Esophagus muscularis mucosa (tissue), 4 donors: ENCODE measurements at regions of chr10 and their contacts with region 1.

Region 1: DNA sequence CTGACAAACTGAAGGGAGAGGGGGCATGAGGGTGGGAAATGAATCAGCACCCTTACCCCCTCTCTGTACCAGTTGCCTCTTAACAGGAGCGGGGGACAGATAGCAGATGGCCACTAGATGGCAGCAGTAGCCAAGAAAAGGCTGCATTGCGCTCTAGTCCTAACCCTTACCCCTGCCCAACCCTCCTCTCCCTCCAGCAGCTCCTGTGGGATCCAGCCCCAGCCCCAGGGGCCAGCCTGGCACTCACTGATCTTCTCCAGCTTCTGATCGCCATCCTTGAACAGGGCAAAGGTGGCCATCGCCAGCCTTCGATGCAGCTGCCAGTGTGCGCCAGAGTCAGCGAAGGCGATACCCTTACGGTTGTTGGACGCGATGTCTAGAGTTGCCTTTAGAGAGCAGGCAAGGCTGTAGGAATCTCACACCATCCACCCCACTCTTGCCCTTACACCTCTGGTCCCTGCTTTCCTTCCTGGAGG is 2.2 kb downstream of the CYP17A1 start:
- DNase-seq: no peak
- H3K4me3 ChIP-seq: no peak overlapping the region
- H3K27ac ChIP-seq: no peak overlapping the region
- H3K4me1 ChIP-seq: peaks cover 4 to 11% (median 8%) of the 10 kb centered on the region in 4 donors
- H3K27me3 ChIP-seq: no peaks in the 10 kb centered on the region
- CTCF ChIP-seq: peak; percentile 83 to 86 (median 85)
- EP300 ChIP-seq: no peak
- POLR2A ChIP-seq: no peak

Region 2: GRCh38 chr10:102729029-102730026 is 105.7 kb before region 1 on chr10:
- intact Hi-C with region 1: loop called (anchors 5 kb)
- DNase-seq: no peak
- H3K4me3 ChIP-seq: no peak overlapping the region
- H3K27ac ChIP-seq: no peak overlapping the region
- H3K4me1 ChIP-seq: peaks cover 9 to 13% (median 12%) of the 10 kb centered on the region in 4 donors
- H3K27me3 ChIP-seq: no peaks in the 10 kb centered on the region
- CTCF ChIP-seq: peak in 2 of 3 experiments; percentile 92 to 96
- EP300 ChIP-seq: no peak
- POLR2A ChIP-seq: no peak

Region 3: DNA sequence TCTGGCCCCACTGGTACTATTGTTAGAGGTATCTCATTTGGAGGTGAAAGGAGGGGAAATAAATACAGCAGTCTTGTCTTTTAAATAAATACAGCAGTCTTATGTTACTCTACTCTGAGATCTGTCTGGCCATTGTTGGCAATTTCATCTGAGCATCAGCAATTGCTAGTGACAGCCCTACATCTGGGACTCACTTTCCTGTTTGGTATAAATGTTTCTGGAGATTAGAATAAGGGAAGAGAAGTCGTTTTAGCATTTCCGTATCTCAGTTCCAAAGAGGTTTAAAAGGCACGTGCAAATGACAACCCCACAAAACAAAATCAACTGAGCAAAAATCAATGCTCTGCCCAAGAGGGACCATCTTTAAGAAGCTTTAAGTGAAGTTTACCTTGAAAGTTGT is 65.0 kb after region 1 on chr10:
- intact Hi-C with region 1: loop called (anchors 2 kb)
- DNase-seq: peak; percentile 29
- H3K4me3 ChIP-seq: no peak overlapping the region
- H3K27ac ChIP-seq: no peak overlapping the region
- H3K4me1 ChIP-seq: no peaks in the 10 kb centered on the region
- H3K27me3 ChIP-seq: no peaks in the 10 kb centered on the region
- CTCF ChIP-seq: no peak
- EP300 ChIP-seq: no peak
- POLR2A ChIP-seq: no peak

Region 4: DNA sequence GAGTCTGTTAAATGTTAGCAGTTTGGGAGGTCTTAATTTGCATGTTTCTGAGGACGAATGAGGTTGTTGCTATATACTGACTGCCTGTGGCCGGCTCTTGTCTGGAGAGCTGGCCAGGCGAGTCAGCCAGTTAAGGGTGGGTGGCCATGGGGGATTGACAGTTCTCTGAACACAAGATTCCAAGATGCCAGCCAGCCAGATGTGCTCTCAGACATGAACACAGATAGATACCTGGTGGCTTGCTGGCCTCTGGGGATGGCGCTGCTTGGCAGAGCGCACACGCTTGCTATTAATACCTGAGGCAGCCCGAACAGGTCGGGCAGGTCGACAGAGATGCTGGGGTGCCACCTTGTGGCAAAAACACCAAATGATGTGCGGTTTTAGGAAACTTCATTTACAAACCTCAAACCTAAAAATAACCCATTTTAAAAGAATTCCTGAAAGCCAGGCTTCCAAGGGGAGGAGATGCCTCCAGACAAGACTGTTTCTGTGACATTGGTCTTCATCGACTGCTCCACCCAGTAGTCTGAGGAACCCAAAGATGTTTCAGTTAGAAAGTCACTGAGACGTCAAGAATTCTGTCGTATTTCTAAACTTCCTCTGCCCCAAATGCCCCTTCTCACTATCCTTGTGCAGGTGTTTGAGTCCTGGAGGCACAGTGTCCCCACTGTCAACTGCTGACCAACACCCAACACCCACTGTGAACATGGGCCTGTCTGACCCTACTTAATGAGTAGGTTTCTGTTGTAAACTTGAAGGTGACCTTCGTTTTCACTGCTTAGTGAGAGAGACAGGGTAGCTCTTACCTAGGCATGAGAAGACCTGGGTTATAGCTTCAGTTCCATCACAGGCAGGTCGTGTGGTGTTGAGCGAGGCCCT is 234.6 kb after region 1 on chr10:
- intact Hi-C with region 1: loop called (anchors 10 kb)
- DNase-seq: no peak
- H3K4me3 ChIP-seq: no peak overlapping the region
- H3K27ac ChIP-seq: no peak overlapping the region
- H3K4me1 ChIP-seq: peaks cover 0 to 6% (median 0%) of the 10 kb centered on the region in 4 donors
- H3K27me3 ChIP-seq: no peaks in the 10 kb centered on the region
- CTCF ChIP-seq: peak; percentile 65 to 70 (median 68)
- EP300 ChIP-seq: no peak
- POLR2A ChIP-seq: no peak

Region 5: DNA sequence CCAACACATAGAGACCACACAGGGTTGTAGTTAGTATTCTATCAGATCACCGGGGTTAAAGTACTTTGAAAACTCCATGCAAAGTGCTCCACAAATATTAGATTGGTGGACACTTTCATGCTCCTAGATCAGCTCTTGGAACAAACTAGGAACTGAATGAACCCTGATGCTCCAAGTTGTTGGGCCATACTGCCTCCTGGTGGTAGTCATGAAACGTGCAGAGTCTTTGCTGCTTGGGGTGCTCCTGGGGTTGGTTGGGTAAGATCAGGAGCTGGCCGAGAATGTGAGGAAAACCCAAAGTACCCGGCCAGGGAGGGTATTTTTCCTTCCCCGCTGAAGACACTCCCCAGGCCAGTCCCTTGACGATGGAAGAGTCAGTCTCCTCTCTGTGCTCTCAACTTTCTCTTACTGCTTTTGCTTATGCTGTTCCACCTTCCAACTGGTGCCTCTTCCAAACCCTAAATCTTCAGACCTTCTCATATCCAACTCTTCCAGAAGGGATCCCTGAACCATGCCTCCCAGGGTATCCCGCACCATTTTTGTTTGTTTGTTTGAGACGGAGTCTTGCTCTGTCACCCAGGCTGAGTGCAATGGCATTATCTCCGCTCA is 409.7 kb after region 1 on chr10:
- intact Hi-C with region 1: no loop called
- DNase-seq: no peak
- H3K4me3 ChIP-seq: no peak overlapping the region
- H3K27ac ChIP-seq: no peak overlapping the region
- H3K4me1 ChIP-seq: peaks cover 11 to 22% (median 12%) of the 10 kb centered on the region in 4 donors
- H3K27me3 ChIP-seq: no peaks in the 10 kb centered on the region
- CTCF ChIP-seq: peak; percentile 88 to 93 (median 92)
- EP300 ChIP-seq: no peak
- POLR2A ChIP-seq: no peak